ENCODE measurements at regions of chr16 and their contacts with region 1.

Region 1: GRCh38 chr16:31873556-31874365 is at the start of gene ZNF267:
- DNase-seq: peak; percentile 87
- H3K4me3 ChIP-seq: peak within 1 kb of the TSS; percentile 93 to 99 (median 94)
- H3K27ac ChIP-seq: peak within 1 kb of the TSS; percentile 90
- H3K4me1 ChIP-seq: peaks cover 44% of the 10 kb centered on the region
- H3K27me3 ChIP-seq: no peaks in the 10 kb centered on the region
- CTCF ChIP-seq: no peak
- total RNA-seq, gene ZNF267: 11.4 to 14.0 TPM

Region 2: GRCh38 chr16:31713071-31713944 is 160.5 kb before region 1 on chr16:
- CTCF ChIA-PET with region 1: no interaction called
- dilution Hi-C with region 1: no loop called
- in situ Hi-C with region 1: loop called in 1 of 2 experiments (anchors 25 kb)
- intact Hi-C with region 1: loop called (anchors 2 kb)
- DNase-seq: peak; percentile 90
- H3K4me3 ChIP-seq: peak overlapping the region; percentile 90 to 98 (median 94)
- H3K27ac ChIP-seq: peak overlapping the region; percentile 89
- H3K4me1 ChIP-seq: peaks cover 15% of the 10 kb centered on the region
- H3K27me3 ChIP-seq: no peaks in the 10 kb centered on the region
- CTCF ChIP-seq: no peak

Region 3: GRCh38 chr16:31810863-31811262 is 62.9 kb before region 1 on chr16:
- CTCF ChIA-PET with region 1: no interaction called
- dilution Hi-C with region 1: no loop called
- in situ Hi-C with region 1: no loop called
- intact Hi-C with region 1: no loop called
- DNase-seq: no peak
- H3K4me3 ChIP-seq: no peak overlapping the region
- H3K27ac ChIP-seq: no peak overlapping the region
- H3K4me1 ChIP-seq: no peaks in the 10 kb centered on the region
- H3K27me3 ChIP-seq: no peaks in the 10 kb centered on the region
- CTCF ChIP-seq: no peak

Region 4: GRCh38 chr16:31888735-31889134 is 15.0 kb after region 1 on chr16:
- CTCF ChIA-PET with region 1: interaction called, 10 read pairs
- dilution Hi-C with region 1: no loop called
- in situ Hi-C with region 1: no loop called
- intact Hi-C with region 1: no loop called
- DNase-seq: no peak
- H3K4me3 ChIP-seq: no peak overlapping the region
- H3K27ac ChIP-seq: no peak overlapping the region
- H3K4me1 ChIP-seq: no peaks in the 10 kb centered on the region
- H3K27me3 ChIP-seq: no peaks in the 10 kb centered on the region
- CTCF ChIP-seq: no peak

Measured in mammary epithelial cell (primary cell).